Ascending aorta (tissue), 2 donors: ENCODE measurements at regions of chr16 and their contacts with region 1.

Region 1: DNA sequence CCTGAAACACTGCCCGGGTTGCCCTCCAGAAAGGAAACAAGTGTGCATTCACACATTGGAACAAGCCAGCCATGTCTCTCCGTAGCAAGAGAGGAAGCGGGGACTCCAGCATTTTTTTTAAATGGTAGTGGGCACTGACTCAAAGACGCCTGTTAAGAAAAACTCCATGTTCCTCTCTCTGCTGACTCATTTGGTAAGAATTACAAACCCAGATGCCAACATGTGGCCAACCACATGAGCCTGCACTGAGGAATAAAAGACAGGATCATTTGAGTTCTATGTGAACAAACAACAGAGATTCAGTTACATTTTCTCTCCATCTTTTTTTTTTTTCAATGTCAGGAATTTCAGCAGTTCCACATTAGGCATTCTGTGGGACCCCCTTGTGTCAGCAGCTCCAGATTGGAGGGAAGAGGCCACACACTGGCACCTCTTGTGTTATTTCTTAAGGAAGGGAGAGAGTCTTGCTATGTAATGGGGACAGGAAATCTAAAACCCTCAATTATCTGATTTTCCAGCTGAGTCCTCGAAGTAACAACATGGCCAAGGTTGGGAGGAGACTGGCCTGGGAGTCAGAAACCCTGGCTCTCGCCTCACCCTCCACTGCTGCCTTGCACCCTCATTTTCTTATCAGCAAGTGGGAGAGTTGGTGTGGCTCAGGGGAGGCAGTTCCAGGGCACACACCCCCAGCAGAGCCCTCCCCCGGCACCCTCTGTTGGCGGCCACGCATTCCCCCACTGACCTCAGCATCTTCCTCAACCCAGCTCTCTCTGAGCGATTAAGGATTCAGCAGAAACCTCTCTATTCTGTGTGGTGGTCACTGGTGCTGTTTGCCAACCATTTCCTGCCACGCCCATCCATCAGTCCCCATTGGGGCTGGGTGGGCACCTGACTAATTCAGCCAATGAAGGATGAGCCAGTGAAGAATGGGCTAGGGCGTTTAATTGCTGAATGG is 173.0 kb downstream of the FOXL1 start:
- DNase-seq: peak in 1 of 2 donors; percentile 84
- H3K4me3 ChIP-seq: peak overlapping the region in 1 of 2 donors; percentile 27
- H3K27ac ChIP-seq: peak overlapping the region; percentile 80 to 90
- H3K4me1 ChIP-seq: peaks cover 4 to 39% of the 10 kb centered on the region in 2 donors
- H3K27me3 ChIP-seq: no peaks in the 10 kb centered on the region
- CTCF ChIP-seq: no peak

Region 2: GRCh38 chr16:86575754-86576557 is 175.4 kb before region 1 on chr16:
- intact Hi-C with region 1: loop called (anchors 2 kb)
- DNase-seq: peak; percentile 75 to 96
- H3K4me3 ChIP-seq: peak overlapping the region; percentile 57 to 79
- H3K27ac ChIP-seq: peak overlapping the region; percentile 91 to 99
- H3K4me1 ChIP-seq: peaks cover 7 to 53% of the 10 kb centered on the region in 2 donors
- H3K27me3 ChIP-seq: no peaks in the 10 kb centered on the region
- CTCF ChIP-seq: peak; percentile 68 to 75 (median 70)

Region 3: DNA sequence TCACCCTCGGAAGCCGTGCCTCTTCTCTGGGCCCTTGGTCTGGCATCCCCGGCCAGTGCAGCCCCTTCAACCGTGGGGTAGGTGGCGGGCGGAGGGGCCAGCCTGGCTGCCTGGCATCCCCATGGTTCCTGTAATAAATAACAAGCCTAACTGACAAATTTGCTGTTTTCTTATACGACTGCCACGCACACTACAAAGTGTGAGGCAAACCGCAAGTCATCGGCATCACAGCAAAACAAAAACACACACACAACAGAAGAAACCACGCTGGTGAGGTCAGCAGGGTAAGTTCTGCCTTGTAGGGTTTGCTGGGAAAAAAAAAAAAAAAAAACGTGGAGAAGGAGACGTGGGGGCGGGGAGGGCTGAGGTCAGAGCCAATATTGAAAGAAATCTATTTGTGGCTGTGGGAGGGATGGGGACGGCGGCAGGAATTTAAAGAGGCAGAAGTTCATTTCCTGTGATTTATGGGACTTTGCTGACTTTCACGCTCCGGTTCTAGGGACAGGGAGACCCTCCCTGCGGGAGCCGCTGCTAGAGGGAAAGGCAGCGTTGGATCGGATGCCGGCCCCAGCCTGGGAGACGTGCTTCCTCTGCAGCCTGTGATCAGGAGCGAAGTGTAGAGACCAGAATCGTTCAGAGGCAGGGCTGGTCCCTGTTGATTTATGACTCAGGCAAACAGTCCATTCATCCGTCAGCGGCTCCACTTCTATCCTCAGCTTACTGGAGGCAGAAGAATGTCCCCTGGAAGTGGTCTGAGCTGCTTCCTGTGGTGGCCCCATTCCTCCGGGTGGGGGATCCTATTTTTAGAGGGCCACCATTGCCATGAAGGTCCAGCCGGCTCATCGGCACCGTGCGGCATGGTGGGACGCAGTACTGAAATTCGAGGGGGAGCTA is 10.2 kb before region 1 on chr16:
- intact Hi-C with region 1: loop called (anchors 1 kb)
- DNase-seq: peak; percentile 60 to 93
- H3K4me3 ChIP-seq: peak overlapping the region; percentile 46 to 58
- H3K27ac ChIP-seq: peak overlapping the region; percentile 94 to 100
- H3K4me1 ChIP-seq: peaks cover 0 to 16% of the 10 kb centered on the region in 2 donors
- H3K27me3 ChIP-seq: no peaks in the 10 kb centered on the region
- CTCF ChIP-seq: no peak

Region 4: DNA sequence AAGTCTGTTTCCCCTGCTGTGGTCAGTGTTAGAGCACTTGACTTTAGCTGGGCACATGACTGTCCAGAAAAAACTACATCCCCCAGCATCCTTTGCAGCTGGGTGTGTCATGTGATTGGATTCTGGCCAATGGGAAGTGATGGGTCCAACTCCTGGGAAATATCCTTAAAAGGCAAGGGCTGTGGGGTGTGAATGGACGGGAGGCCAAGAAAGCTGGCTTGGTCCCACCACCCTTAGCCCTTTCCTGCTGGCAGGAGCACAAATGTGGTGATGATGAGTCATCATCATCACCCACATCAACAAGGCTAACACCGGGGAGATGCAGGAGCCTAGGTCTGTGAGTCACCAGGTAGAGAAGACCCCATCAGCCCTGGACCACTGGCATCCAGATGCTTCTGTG is 224.1 kb after region 1 on chr16:
- intact Hi-C with region 1: no loop called
- DNase-seq: peak; percentile 45 to 82
- H3K4me3 ChIP-seq: no peak overlapping the region
- H3K27ac ChIP-seq: peak overlapping the region; percentile 6 to 54
- H3K4me1 ChIP-seq: peaks cover 0 to 3% of the 10 kb centered on the region in 2 donors
- H3K27me3 ChIP-seq: no peaks in the 10 kb centered on the region
- CTCF ChIP-seq: no peak